ENCODE measurements at regions of chr15 and their contacts with region 1.

Region 1: GRCh38 chr15:63006032-63006878 is 36.3 kb upstream of the TPM1 start:
- DNase-seq: no peak

Region 2: DNA sequence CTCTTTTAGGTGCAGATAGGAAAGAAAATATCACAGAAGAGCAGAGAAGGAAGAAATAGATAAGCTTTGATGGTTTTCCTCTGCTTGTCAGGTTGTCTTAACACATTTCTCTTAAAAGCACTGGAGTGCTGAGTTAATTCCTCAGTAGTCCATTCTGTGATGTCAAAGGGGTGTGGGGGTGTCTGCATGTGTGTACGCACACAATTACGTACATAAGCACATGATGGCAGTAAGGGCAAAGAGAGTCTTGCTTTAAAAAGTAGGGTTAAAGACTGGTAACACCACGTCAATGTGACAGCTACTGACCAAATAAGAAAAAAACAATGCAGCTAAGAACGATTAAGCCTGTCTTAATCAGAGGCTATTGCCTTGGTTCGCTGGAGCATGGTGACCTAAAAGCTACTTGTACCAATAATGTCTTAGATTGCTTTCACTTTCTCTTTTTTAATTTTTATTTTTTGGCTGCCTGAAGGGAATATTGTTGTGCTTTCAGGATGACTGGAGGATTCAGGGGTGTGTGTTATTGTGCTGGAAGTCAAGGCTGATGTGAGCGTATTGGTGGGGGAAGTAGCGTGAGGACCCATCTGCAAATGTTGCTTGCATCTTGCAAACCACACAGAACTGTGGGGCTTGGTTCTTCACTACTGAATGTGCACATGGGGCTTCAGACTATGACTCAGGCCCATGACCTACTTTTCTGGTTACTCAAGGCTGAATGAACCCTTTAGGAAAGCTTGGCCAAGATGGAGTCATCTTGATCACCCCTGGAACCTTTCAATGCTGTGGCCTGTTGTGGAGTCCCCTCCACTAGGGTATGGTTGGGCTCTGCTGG is 381.5 kb before region 1 on chr15:
- intact Hi-C with region 1: no loop called
- DNase-seq: no peak

Region 3: DNA sequence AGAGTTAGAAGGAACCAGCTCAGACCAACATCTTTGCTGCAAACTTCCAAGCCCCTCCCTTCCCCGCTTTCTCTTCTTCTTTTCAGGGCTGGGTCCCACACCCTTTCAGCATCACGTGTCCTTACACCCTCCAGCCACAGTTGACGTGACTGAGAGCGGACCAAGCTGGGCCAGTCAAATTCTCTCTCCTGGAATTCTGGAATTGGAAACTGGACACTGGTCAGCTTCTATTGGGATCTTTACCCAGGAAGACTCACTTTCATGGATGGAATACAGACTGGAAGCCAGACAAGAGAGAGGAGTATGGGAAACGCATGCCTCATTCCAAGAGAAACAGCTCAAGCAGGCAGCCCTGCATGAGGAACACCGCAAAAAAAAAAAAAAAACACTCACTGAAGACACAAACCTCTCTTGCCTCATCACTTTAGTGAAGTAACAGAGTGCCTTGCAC is 23.9 kb after region 1 on chr15:
- intact Hi-C with region 1: loop called (anchors 1 kb)
- DNase-seq: no peak

Region 4: GRCh38 chr15:63109920-63110319 is 103.7 kb after region 1 on chr15:
- intact Hi-C with region 1: no loop called
- DNase-seq: no peak

Measured in cardiac septum (tissue), 1 donor.